CD8-positive, alpha-beta memory T cell (primary cell): ENCODE measurements at regions of chr14 and their contacts with region 1.

Region 1: DNA sequence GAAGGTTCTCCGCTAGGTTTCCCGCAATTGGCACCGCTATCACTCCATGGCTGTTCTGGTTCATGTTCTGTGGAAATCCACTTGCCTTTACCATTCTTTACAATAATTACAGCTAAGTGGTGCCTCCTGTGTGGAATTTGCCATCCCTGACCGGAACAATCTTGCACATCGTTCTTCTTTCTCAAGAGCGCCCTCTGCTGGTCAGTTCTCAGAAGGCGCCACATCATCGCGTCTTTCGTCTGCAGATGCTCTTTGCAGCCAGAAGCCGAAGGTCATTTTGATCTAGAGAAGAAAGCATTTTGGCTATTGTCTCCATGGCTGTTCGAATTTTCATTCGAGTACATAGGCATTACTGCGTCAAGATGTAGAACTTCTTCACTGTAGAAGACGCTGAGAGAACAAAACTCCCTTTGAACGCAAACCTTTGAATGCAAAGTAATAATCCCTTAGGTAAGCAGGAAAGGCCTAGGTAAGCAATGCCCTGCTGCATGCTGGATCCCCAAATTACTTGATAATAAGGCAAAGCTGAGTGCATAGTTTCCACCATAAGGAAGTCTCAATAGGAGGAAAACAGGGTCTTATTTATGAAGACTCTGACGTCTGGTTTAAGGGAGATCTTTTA is 10.1 kb upstream of the RTRAF start:
- DNase-seq: peak; percentile 62 to 86 (median 75)
- H3K4me3 ChIP-seq: no peak overlapping the region
- H3K4me3 Mint-ChIP-seq: no peak overlapping the region
- H3K27ac ChIP-seq: no peak overlapping the region
- H3K27ac Mint-ChIP-seq: peak overlapping the region in 1 of 8 donors; percentile 48
- H3K4me1 ChIP-seq: peaks cover 4% of the 10 kb centered on the region
- H3K4me1 Mint-ChIP-seq: peaks cover 5 to 7% (median 6%) of the 10 kb centered on the region in 3 donors
- H3K27me3 ChIP-seq: no peaks in the 10 kb centered on the region
- H3K27me3 Mint-ChIP-seq: no peaks in the 10 kb centered on the region

Region 2: GRCh38 chr14:51283402-51284085 is 695.7 kb before region 1 on chr14:
- CTCF ChIA-PET with region 1: interaction called, 10 read pairs
- POLR2A ChIA-PET with region 1: no interaction called
- DNase-seq: peak in 2 of 5 donors; percentile 15 to 25
- H3K4me3 ChIP-seq: no peak overlapping the region
- H3K4me3 Mint-ChIP-seq: no peak overlapping the region
- H3K27ac ChIP-seq: no peak overlapping the region
- H3K27ac Mint-ChIP-seq: no peak overlapping the region
- H3K4me1 ChIP-seq: no peaks in the 10 kb centered on the region
- H3K4me1 Mint-ChIP-seq: no peaks in the 10 kb centered on the region
- H3K27me3 ChIP-seq: no peaks in the 10 kb centered on the region
- H3K27me3 Mint-ChIP-seq: no peaks in the 10 kb centered on the region

Region 3: GRCh38 chr14:51780006-51780692 is 199.1 kb before region 1 on chr14:
- CTCF ChIA-PET with region 1: interaction called, 43 read pairs
- POLR2A ChIA-PET with region 1: no interaction called
- DNase-seq: peak; percentile 53 to 80 (median 59)
- H3K4me3 ChIP-seq: no peak overlapping the region
- H3K4me3 Mint-ChIP-seq: peak overlapping the region in 4 of 7 donors; percentile 25 to 42 (median 28)
- H3K27ac ChIP-seq: no peak overlapping the region
- H3K27ac Mint-ChIP-seq: peak overlapping the region in 1 of 8 donors; percentile 12
- H3K4me1 ChIP-seq: peaks cover 10% of the 10 kb centered on the region
- H3K4me1 Mint-ChIP-seq: peaks cover 11 to 16% (median 15%) of the 10 kb centered on the region in 3 donors
- H3K27me3 ChIP-seq: no peaks in the 10 kb centered on the region
- H3K27me3 Mint-ChIP-seq: peaks cover 18 to 51% of the 10 kb centered on the region in 2 donors

Region 4: GRCh38 chr14:51828017-51828797 is 151.0 kb before region 1 on chr14:
- CTCF ChIA-PET with region 1: interaction called, 12 read pairs
- POLR2A ChIA-PET with region 1: interaction called, 3 read pairs
- DNase-seq: peak; percentile 40 to 80 (median 47)
- H3K4me3 ChIP-seq: no peak overlapping the region
- H3K4me3 Mint-ChIP-seq: no peak overlapping the region
- H3K27ac ChIP-seq: no peak overlapping the region
- H3K27ac Mint-ChIP-seq: peak overlapping the region in 4 of 8 donors; percentile 7 to 58 (median 20)
- H3K4me1 ChIP-seq: peaks cover 17% of the 10 kb centered on the region
- H3K4me1 Mint-ChIP-seq: no peaks in the 10 kb centered on the region
- H3K27me3 ChIP-seq: no peaks in the 10 kb centered on the region
- H3K27me3 Mint-ChIP-seq: no peaks in the 10 kb centered on the region

Region 5: DNA sequence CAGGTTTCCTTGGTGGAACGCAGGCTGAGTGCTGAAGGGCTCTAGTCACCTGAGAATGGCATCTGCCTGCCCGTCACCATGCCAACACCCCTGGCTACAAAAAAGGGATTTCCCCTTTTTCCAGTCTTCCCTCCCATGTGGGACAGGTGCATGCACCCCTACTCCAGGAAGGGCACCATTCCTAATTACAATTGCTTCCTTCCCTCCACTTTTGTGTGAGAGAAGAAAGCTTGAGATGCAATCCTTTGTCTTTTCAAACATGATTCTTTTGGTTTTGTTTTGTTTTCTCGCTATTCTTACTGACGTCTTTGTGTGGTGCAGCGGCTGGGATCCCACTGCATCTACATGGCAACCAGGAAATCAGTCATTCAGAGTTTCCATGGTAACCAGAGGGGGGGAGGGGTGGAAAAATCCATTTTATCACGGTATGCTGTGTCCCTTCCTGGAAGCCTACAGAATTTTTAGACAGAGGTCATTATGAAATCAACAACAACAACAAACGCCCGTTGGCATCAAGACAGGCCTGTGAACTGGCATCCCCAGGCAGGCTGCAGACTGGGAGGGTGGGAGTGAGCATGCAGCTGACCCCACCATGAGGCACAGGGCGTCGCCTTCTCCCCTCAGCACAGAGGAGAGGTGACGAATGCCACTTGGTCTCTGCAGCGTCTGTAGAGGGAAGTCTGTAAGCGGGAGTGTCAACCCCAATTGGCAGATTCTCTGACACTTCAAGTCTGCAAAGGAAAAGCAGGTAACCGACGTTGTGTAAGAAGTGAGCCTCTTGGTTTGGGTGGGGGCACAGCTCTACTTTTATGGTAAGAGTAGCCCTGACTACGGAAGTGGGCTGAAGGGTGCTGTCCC is 132.3 kb before region 1 on chr14:
- CTCF ChIA-PET with region 1: interaction called, 24 read pairs
- POLR2A ChIA-PET with region 1: interaction called, 4 read pairs
- DNase-seq: peak; percentile 76 to 97 (median 95)
- H3K4me3 ChIP-seq: peak overlapping the region; percentile 72
- H3K4me3 Mint-ChIP-seq: peak overlapping the region; percentile 86 to 95 (median 87)
- H3K27ac ChIP-seq: peak overlapping the region; percentile 98
- H3K27ac Mint-ChIP-seq: peak overlapping the region; percentile 96 to 100 (median 99)
- H3K4me1 ChIP-seq: peaks cover 53% of the 10 kb centered on the region
- H3K4me1 Mint-ChIP-seq: peaks cover 64 to 79% (median 73%) of the 10 kb centered on the region in 3 donors
- H3K27me3 ChIP-seq: no peaks in the 10 kb centered on the region
- H3K27me3 Mint-ChIP-seq: peaks cover 0 to 11% of the 10 kb centered on the region in 2 donors

Region 6: DNA sequence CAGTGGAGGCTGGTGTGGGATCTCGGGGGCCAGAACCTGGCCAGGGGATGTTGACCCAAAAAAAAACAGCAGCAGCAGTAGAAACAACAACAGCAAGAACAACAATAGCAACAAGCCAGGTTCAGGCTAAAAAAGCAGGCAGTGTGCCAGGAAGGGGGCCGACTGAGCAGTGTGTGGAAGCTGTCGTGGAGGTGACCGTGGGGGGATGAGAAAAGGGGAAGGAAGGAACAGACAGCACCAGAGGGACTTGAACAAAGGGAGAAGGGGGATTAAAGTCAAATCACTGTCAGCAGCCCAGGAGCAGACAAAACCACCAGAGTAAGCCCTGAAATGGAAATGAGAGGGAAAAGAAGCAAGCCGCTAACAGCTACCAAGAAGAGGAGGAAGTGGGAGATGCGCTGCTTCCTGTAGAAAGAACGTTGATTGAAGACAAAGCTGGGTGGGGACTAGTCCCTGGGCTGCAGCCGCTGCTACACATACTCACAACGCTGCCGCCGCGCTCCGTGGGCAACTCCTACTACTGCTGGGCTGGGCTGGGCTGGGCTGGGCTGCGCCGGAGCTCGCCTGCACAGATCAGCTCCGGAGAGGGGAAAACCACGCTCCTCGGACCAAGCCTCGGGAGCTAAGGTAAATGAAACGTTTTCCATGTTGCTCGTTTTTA is 118.9 kb before region 1 on chr14 and contains the start of gene GNG2:
- CTCF ChIA-PET with region 1: interaction called, 31 read pairs
- POLR2A ChIA-PET with region 1: no interaction called
- DNase-seq: peak; percentile 71 to 90 (median 84)
- H3K4me3 ChIP-seq: peak within 1 kb of the TSS; percentile 98
- H3K4me3 Mint-ChIP-seq: peak within 1 kb of the TSS; percentile 93 to 99 (median 98)
- H3K27ac ChIP-seq: peak within 1 kb of the TSS; percentile 93
- H3K27ac Mint-ChIP-seq: peak within 1 kb of the TSS; percentile 93 to 99 (median 96)
- H3K4me1 ChIP-seq: peaks cover 59% of the 10 kb centered on the region
- H3K4me1 Mint-ChIP-seq: peaks cover 42 to 59% (median 55%) of the 10 kb centered on the region in 3 donors
- H3K27me3 ChIP-seq: no peaks in the 10 kb centered on the region
- H3K27me3 Mint-ChIP-seq: peaks cover 0 to 3% of the 10 kb centered on the region in 2 donors
- total RNA-seq, gene GNG2: 106 to 112 TPM

Region 7: GRCh38 chr14:51967521-51967920 is 11.7 kb before region 1 on chr14:
- CTCF ChIA-PET with region 1: interaction called, 14 read pairs
- POLR2A ChIA-PET with region 1: no interaction called
- DNase-seq: no peak
- H3K4me3 ChIP-seq: no peak overlapping the region
- H3K4me3 Mint-ChIP-seq: no peak overlapping the region
- H3K27ac ChIP-seq: no peak overlapping the region
- H3K27ac Mint-ChIP-seq: peak overlapping the region in 5 of 8 donors; percentile 28 to 81 (median 65)
- H3K4me1 ChIP-seq: peaks cover 14% of the 10 kb centered on the region
- H3K4me1 Mint-ChIP-seq: peaks cover 15 to 32% (median 15%) of the 10 kb centered on the region in 3 donors
- H3K27me3 ChIP-seq: no peaks in the 10 kb centered on the region
- H3K27me3 Mint-ChIP-seq: no peaks in the 10 kb centered on the region